Calu3 (cell line): ENCODE measurements at regions of chr3 and their contacts with region 1.

Region 1: DNA sequence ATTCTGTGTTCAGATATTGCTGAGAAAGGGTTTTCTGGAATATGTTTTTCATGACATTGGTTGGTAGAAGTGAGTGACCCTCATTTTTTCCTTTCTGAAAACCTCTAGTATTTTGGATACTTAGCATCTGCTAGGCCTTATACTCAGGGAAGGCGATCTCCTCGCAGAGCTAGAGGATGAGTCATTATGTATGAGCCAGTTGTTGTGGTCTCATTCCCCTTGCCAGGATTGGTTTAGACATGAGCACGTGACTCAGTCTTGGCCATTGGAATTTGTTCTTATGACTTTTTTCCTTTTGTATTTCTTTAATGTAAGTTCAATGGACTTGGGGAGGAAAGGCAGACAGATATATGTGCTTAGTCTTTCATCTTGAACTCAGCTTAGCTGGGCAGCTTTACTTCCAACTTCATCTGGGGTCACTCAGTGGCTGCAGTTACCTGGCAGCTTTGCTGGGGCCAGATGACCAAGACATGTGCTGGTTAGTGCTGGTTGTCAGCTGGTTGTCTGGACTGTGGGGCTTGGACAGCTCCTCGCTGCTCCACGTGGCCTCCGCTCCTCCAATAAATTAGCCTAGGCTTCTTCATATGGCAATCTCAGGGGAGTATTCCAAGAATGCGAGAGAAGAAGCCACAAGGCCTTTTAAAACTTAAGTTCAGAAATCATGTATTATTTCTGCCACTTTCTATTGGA is 207.5 kb downstream of the IL20RB start:
- DNase-seq: no peak
- H3K4me3 Mint-ChIP-seq: no peak overlapping the region
- H3K27ac Mint-ChIP-seq: no peak overlapping the region
- H3K4me1 Mint-ChIP-seq: no peaks in the 10 kb centered on the region
- H3K27me3 Mint-ChIP-seq: peaks cover 22% of the 10 kb centered on the region
- CTCF ChIP-seq: no peak

Region 2: GRCh38 chr3:136955813-136956212 is 209.4 kb before region 1 on chr3:
- CTCF ChIA-PET with region 1: no interaction called
- intact Hi-C with region 1: no loop called
- DNase-seq: peak; percentile 79
- H3K4me3 Mint-ChIP-seq: peak overlapping the region; percentile 47
- H3K27ac Mint-ChIP-seq: peak overlapping the region; percentile 89
- H3K4me1 Mint-ChIP-seq: peaks cover 89% of the 10 kb centered on the region
- H3K27me3 Mint-ChIP-seq: no peaks in the 10 kb centered on the region
- CTCF ChIP-seq: no peak

Region 3: GRCh38 chr3:137020315-137020714 is 144.9 kb before region 1 on chr3:
- CTCF ChIA-PET with region 1: no interaction called
- intact Hi-C with region 1: no loop called
- DNase-seq: no peak
- H3K4me3 Mint-ChIP-seq: no peak overlapping the region
- H3K27ac Mint-ChIP-seq: no peak overlapping the region
- H3K4me1 Mint-ChIP-seq: no peaks in the 10 kb centered on the region
- H3K27me3 Mint-ChIP-seq: no peaks in the 10 kb centered on the region
- CTCF ChIP-seq: no peak

Region 4: DNA sequence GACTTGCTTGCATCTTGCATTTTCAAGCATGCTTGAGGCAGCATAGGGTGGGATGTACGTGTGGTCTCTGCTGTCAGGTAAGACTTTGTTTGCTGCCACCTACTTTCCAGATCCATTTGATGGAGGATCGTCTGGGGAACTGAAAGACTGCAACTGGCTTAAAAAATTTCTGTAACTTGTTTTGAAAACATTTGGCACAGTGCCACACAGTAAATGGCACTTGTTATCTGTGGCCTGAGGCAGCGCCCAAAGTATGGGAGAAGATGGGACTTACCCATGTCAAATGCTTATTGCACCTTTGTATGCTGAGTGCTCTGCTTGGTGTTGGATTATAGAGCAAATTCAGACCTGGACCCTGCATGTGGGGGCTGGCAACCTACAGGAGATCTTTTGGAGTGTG is 65.9 kb after region 1 on chr3:
- CTCF ChIA-PET with region 1: interaction called, 10 read pairs
- intact Hi-C with region 1: no loop called
- DNase-seq: no peak
- H3K4me3 Mint-ChIP-seq: no peak overlapping the region
- H3K27ac Mint-ChIP-seq: no peak overlapping the region
- H3K4me1 Mint-ChIP-seq: no peaks in the 10 kb centered on the region
- H3K27me3 Mint-ChIP-seq: peaks cover 63% of the 10 kb centered on the region
- CTCF ChIP-seq: no peak